ENCODE measurements at regions of chr3 and their contacts with region 1.

Region 1: GRCh38 chr3:43178891-43179366 is 73.0 kb upstream of the POMGNT2 start:
- DNase-seq: no peak
- ATAC-seq: peak in 2 of 4 donors; percentile 31 to 37
- H3K4me3 ChIP-seq: no peak overlapping the region
- H3K27ac ChIP-seq: peak overlapping the region in 2 of 12 donors; percentile 61 to 70
- H3K4me1 ChIP-seq: peaks cover 0 to 58% (median 22%) of the 10 kb centered on the region in 12 donors
- H3K27me3 ChIP-seq: no peaks in the 10 kb centered on the region
- CTCF ChIP-seq: no peak
- POLR2A ChIP-seq: no peak

Region 2: GRCh38 chr3:43215663-43216275 is 36.8 kb after region 1 on chr3:
- intact Hi-C with region 1: loop called in 1 of 10 experiments (anchors 5 kb)
- DNase-seq: no peak
- ATAC-seq: no peak
- H3K4me3 ChIP-seq: no peak overlapping the region
- H3K27ac ChIP-seq: peak overlapping the region in 1 of 12 donors; percentile 35
- H3K4me1 ChIP-seq: peaks cover 0 to 22% (median 6%) of the 10 kb centered on the region in 12 donors
- H3K27me3 ChIP-seq: no peaks in the 10 kb centered on the region
- CTCF ChIP-seq: no peak
- POLR2A ChIP-seq: no peak

Measured in heart left ventricle (tissue), 16 donors.